ENCODE measurements at regions of chr19 and their contacts with region 1.

Region 1: DNA sequence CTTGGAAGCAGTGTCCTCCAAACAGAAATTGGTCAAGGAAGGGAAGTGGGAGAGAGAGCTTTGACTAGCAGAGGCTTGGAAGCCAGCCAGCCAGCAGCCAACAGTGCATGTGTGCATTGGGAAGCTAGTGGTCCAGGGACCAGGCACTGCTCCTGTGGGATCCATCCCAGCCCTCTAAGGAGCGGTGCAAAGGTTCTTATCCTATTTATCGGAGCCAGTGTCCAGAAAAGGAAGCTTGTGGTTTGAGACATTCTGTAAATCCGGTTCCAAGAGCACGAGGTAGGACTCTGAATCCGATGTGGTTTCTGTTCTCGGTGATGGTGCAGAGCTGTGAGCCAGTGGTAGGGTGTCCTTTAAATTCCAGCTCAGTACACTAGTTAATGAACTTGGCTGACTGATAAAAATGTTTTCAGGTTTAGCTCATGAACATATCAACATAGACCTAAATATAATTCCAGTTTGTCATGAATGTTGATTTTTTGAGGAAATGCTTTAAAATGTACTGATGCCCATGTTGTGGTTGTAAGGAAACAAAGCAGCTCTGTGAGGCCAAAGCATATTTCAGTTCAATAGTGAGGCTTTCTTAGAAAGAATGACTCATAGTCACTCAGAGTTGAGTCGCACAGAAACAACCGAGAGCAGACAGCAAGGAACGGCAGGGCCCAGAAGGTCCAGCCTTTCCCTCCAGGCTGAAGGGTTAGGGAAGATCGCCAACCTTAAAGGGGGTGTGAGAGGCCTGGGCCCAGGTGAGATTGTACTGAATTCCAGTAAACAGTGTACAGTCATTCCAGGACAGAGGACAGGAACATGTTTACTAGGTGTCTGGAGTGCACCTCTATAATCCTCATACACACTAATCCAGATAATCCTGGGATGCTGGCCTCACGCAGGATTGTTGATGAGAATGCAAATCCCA is 21.5 kb upstream of the GARRE1 start:
- DNase-seq: peak; percentile 93
- ATAC-seq: peak; percentile 91
- H3K4me3 ChIP-seq: peak overlapping the region in 1 of 2 experiments; percentile 32; a peak in 2 of 4 replicates
- H3K27ac ChIP-seq: peak overlapping the region; percentile 72
- H3K4me1 ChIP-seq: peaks cover 15% of the 10 kb centered on the region
- H3K27me3 ChIP-seq: no peaks in the 10 kb centered on the region
- CTCF ChIP-seq: no peak

Region 2: GRCh38 chr19:33241530-33242101 is 991.2 kb before region 1 on chr19:
- CTCF ChIA-PET with region 1: no interaction called
- POLR2A ChIA-PET with region 1: no interaction called
- in situ Hi-C with region 1: no loop called
- intact Hi-C with region 1: no loop called
- DNase-seq: no peak
- ATAC-seq: peak; percentile 56
- H3K4me3 ChIP-seq: no peak overlapping the region
- H3K27ac ChIP-seq: no peak overlapping the region
- H3K4me1 ChIP-seq: no peaks in the 10 kb centered on the region; the same call in 1 of the 2 replicates
- H3K27me3 ChIP-seq: no peaks in the 10 kb centered on the region
- CTCF ChIP-seq: peak; percentile 97

Region 3: GRCh38 chr19:33624586-33624985 is 608.2 kb before region 1 on chr19:
- CTCF ChIA-PET with region 1: interaction called, 14 read pairs
- POLR2A ChIA-PET with region 1: no interaction called
- in situ Hi-C with region 1: no loop called
- intact Hi-C with region 1: no loop called
- DNase-seq: no peak
- ATAC-seq: no peak
- H3K4me3 ChIP-seq: no peak overlapping the region
- H3K27ac ChIP-seq: no peak overlapping the region
- H3K4me1 ChIP-seq: no peaks in the 10 kb centered on the region
- H3K27me3 ChIP-seq: peaks cover 18% of the 10 kb centered on the region
- CTCF ChIP-seq: no peak

Region 4: GRCh38 chr19:34269489-34269888 is 36.7 kb after region 1 on chr19:
- CTCF ChIA-PET with region 1: interaction called, 12 read pairs
- POLR2A ChIA-PET with region 1: no interaction called
- in situ Hi-C with region 1: no loop called
- intact Hi-C with region 1: no loop called
- DNase-seq: no peak
- ATAC-seq: no peak
- H3K4me3 ChIP-seq: no peak overlapping the region
- H3K27ac ChIP-seq: peak overlapping the region; percentile 75
- H3K4me1 ChIP-seq: peaks cover 26% of the 10 kb centered on the region
- H3K27me3 ChIP-seq: no peaks in the 10 kb centered on the region
- CTCF ChIP-seq: no peak